ENCODE measurements at regions of chr3 and their contacts with region 1.

Region 1: DNA sequence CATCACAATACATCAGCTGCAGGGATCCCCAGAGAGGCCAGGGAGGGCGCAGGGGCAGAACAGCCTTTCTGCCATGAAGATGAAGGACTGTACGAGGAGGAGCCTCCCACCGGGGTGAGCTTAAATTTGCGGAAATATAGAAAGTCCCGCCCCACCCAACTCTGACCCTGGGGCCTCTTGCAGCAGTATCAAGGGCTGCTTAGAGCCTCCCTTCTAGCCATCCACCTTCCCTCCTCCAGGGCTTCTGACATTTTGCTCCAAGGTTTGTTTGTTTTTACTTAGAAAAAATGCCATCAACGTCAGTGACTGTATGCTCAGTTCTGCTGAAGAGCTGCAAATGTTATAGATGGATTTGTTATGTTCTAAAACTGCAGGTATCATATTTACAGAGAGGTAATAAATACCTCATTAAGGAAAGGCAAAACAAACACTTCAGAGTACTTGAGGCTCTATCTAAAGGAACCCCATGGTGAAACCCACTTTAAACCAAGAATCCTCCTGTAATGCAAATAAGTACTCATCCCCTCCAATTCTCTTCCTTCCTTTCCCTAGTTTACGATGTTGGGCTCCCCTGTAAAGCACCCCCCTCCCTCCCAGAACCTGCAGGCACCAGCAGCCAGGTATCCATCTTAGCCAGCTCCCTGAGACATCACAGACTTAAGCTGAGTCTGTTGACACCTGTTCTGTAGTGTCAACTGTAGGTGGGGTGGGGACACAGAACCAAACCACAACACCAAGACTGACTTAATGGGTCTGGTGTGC is 30.5 kb downstream of the RFTN1 start:
- DNase-seq: peak; percentile 82
- ATAC-seq: peak; percentile 93
- H3K4me3 ChIP-seq: peak overlapping the region in 4 of 5 experiments; percentile 18 to 38 (median 31)
- H3K4me3 Mint-ChIP-seq: peak overlapping the region; percentile 65
- H3K27ac ChIP-seq: peak overlapping the region; percentile 64 to 74
- H3K27ac Mint-ChIP-seq: peak overlapping the region; percentile 74
- H3K4me1 ChIP-seq: peaks cover 63 to 75% of the 10 kb centered on the region in 2 donors
- H3K4me1 Mint-ChIP-seq: peaks cover 79% of the 10 kb centered on the region
- H3K27me3 ChIP-seq: no peaks in the 10 kb centered on the region
- H3K27me3 Mint-ChIP-seq: no peaks in the 10 kb centered on the region
- CTCF ChIP-seq: no peak

Region 2: GRCh38 chr3:14780927-14781507 is 1701.9 kb before region 1 on chr3:
- CTCF ChIA-PET with region 1: no interaction called
- POLR2A ChIA-PET with region 1: no interaction called
- intact Hi-C with region 1: no loop called
- DNase-seq: peak; percentile 17
- ATAC-seq: no peak
- H3K4me3 ChIP-seq: no peak overlapping the region
- H3K4me3 Mint-ChIP-seq: no peak overlapping the region
- H3K27ac ChIP-seq: no peak overlapping the region
- H3K27ac Mint-ChIP-seq: no peak overlapping the region
- H3K4me1 ChIP-seq: no peaks in the 10 kb centered on the region
- H3K4me1 Mint-ChIP-seq: no peaks in the 10 kb centered on the region
- H3K27me3 ChIP-seq: no peaks in the 10 kb centered on the region
- H3K27me3 Mint-ChIP-seq: peaks cover 13% of the 10 kb centered on the region
- CTCF ChIP-seq: peak; percentile 17

Region 3: GRCh38 chr3:16467393-16467792 is 15.6 kb before region 1 on chr3:
- CTCF ChIA-PET with region 1: interaction called, 4 read pairs
- POLR2A ChIA-PET with region 1: no interaction called
- intact Hi-C with region 1: loop called (anchors 1 kb)
- DNase-seq: peak; percentile 84
- ATAC-seq: peak; percentile 95
- H3K4me3 ChIP-seq: peak overlapping the region in 2 of 5 experiments; percentile 20 to 51
- H3K4me3 Mint-ChIP-seq: peak overlapping the region; percentile 82
- H3K27ac ChIP-seq: peak overlapping the region in 1 of 2 donors; percentile 73
- H3K27ac Mint-ChIP-seq: peak overlapping the region; percentile 82
- H3K4me1 ChIP-seq: peaks cover 39 to 46% of the 10 kb centered on the region in 2 donors
- H3K4me1 Mint-ChIP-seq: peaks cover 55% of the 10 kb centered on the region
- H3K27me3 ChIP-seq: no peaks in the 10 kb centered on the region
- H3K27me3 Mint-ChIP-seq: no peaks in the 10 kb centered on the region
- CTCF ChIP-seq: no peak

Region 4: GRCh38 chr3:16496408-16497222 is 13.7 kb after region 1 on chr3:
- CTCF ChIA-PET with region 1: interaction called, 9 read pairs
- POLR2A ChIA-PET with region 1: interaction called, 5 read pairs
- intact Hi-C with region 1: loop called (anchors 2 kb)
- DNase-seq: no peak
- ATAC-seq: peak; percentile 66
- H3K4me3 ChIP-seq: no peak overlapping the region
- H3K4me3 Mint-ChIP-seq: peak overlapping the region; percentile 42
- H3K27ac ChIP-seq: no peak overlapping the region
- H3K27ac Mint-ChIP-seq: peak overlapping the region; percentile 26
- H3K4me1 ChIP-seq: peaks cover 53 to 54% of the 10 kb centered on the region in 2 donors
- H3K4me1 Mint-ChIP-seq: peaks cover 63% of the 10 kb centered on the region
- H3K27me3 ChIP-seq: no peaks in the 10 kb centered on the region
- H3K27me3 Mint-ChIP-seq: no peaks in the 10 kb centered on the region
- CTCF ChIP-seq: no peak

Region 5: DNA sequence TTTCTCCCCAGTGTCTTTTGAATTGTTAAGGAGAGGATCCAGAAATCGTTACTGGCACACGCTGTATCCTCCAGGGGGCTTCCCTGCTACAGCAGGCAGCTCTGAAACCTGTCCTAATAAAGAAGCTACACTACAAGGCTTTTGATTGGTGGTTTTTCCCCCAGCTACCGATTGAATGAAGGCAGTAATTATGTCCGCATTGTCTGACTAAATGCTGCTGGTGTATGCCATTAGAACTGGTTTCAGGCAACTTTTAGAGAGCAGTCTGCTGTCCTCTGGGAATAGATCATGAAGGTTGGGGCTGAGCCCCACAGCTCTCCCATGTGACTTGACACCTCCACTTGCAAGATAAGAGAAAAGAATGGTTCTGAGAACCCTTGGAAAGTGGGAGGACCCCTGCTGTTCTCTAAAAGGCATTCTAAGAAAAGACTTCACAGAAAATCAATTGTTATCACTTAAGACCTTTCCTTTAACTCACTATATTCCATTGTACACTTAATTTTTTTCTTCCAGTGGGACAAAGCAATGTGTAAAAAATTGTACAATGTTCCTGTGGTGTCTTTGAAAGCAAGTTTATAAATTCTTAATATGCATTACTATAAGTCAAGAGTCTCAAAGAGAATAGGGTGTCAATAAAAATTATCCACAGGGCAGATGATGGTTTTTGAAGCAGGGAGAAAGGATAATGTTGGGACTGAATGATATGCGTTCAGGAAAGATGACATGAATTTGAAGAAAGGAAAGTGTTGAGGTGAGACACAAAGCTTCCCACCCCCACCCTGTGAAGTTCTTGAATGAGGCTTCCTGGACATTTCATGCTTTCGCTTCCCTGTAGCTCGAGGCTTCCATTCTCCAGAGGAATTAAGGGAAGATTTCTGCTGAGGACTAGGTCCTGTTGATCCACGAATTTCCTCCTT is 175.3 kb after region 1 on chr3:
- CTCF ChIA-PET with region 1: no interaction called
- POLR2A ChIA-PET with region 1: no interaction called
- intact Hi-C with region 1: no loop called
- DNase-seq: no peak
- ATAC-seq: no peak
- H3K4me3 ChIP-seq: no peak overlapping the region
- H3K4me3 Mint-ChIP-seq: no peak overlapping the region
- H3K27ac ChIP-seq: no peak overlapping the region
- H3K27ac Mint-ChIP-seq: no peak overlapping the region
- H3K4me1 ChIP-seq: no peaks in the 10 kb centered on the region
- H3K4me1 Mint-ChIP-seq: no peaks in the 10 kb centered on the region
- H3K27me3 ChIP-seq: no peaks in the 10 kb centered on the region
- H3K27me3 Mint-ChIP-seq: peaks cover 7% of the 10 kb centered on the region
- CTCF ChIP-seq: no peak